Adrenal gland (tissue), 19 donors: ENCODE measurements at regions of chr19 and their contacts with region 1.

Region 1: DNA sequence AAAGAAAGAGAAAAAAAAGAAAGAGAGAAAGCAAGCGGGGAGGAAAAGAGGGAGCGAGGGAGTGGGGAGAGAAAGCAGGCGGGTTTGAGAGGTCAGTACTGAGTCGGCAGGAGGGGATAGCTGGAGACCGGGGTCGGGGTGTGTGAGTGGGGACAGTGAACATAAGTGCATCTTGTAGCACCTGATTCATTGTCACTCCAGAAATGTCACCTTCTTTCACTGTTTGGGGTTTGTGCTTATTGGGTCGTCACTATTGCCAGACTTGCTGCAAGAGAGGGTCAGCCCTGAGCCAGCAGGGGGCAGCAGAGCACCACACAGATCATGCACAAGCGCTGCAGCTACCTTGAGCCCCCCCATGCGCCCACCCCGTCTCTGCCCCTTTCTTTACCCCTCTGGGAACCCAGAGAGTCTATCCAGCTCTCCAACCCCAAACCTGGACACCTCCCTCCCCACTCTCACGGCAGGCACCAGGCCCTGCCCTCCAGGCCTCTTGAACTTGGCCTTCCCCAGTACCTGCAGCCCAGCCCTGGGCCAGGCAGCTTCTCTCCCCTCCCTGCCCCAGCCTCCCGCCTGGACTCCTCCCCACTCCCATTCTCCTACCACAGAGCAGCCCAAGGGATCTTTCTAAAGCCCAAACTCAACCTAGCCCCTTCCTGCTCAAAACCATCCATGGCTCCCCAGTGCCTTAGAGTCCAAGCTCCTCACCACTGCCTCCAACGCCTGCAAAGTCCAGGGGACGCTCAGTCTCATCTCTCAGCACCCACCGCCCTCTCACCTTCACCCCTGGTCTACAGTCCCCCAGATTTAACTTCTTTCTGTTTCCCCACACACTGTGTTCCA is 9.7 kb upstream of the CEACAM16 start:
- DNase-seq: peak; percentile 73 to 88 (median 83)
- H3K4me3 ChIP-seq: no peak overlapping the region
- H3K27ac ChIP-seq: peak overlapping the region in 1 of 5 donors; percentile 31
- H3K4me1 ChIP-seq: peaks cover 30 to 40% of the 10 kb centered on the region in 2 donors
- H3K27me3 ChIP-seq: no peaks in the 10 kb centered on the region
- CTCF ChIP-seq: peak; percentile 76 to 95 (median 94)
- POLR2A ChIP-seq: no peak

Region 2: DNA sequence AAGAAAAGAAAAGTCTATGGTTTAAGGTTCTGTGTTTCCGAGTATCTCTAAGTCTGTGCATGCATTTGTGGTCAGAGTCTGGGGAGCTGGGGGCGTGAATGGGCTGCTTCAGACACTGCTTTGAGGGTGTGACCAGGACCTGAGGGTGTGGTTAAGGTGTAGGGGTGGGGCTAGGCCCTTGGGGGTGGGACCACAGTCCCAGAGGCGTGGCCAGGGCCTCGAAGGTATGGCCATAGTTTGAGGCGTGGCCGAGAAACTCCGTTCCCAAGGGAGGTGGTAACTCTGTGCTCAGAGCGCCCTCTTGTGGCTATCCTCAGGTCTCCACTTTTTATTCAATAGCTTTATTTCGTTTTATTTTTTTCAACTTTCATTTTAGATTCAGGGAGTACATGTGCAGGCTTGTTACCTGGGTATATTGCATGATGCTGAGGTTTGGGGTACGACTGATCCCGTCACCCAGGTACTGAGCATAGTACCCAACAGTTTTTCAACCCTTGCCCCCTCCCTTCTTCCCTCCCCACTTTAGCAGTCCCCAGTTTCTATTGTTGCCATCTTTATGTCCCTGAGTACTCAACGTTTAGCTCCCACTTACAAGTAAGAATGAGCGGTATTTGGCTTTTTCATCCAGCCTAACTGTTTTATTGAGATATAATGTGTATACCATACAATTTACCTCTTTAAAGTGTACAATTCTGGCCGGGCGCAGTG is 81.4 kb after region 1 on chr19:
- intact Hi-C with region 1: loop called in 1 of 2 experiments (anchors 2 kb)
- DNase-seq: peak; percentile 94 to 98 (median 96)
- H3K4me3 ChIP-seq: no peak overlapping the region
- H3K27ac ChIP-seq: no peak overlapping the region
- H3K4me1 ChIP-seq: peaks cover 6 to 7% of the 10 kb centered on the region in 2 donors
- H3K27me3 ChIP-seq: no peaks in the 10 kb centered on the region
- CTCF ChIP-seq: peak; percentile 89 to 95 (median 92)
- POLR2A ChIP-seq: no peak